ENCODE measurements at regions of chr2 and their contacts with region 1.

Region 1: DNA sequence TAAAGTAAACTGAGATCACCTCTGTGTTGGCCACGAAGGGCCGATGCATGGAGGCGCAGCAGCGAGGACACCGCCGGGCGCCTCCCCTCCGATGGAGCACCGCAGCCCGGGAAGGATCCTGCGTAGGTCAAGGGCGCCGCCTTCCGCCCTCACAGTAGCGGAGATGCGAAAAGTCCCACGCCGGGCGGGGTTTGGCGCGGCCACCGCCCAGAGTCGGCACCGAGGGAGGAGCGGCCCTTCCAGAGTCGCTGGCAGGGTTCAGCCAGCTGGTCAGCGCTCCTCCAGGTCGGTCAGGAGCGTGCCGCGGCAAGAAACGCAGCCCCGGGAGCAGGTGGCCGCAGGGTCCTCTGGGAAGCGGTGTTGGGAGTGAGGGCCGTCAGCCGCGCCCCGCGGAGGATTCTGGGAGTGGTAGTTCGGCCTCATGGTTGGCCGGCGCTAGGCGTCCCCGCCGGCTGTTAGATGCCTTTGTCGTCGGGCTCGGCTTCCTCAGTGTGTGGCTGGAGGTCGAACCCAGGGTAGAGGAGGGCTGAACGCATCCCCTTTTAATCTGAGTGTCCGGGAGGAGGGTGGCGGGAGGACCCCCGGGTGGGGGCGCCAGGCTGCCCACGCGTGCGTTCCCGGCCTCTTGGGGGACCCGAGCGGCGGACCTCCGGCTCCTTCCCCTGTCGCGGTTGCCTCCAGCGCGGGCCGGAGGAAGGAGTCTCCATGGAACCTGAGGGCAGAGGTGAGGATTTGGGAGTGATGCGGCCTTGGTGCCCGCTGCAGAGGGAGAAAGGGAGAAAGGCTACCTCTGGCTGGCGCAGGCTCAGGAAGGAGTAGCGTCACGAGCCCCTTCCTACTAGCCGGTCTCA is at the start of gene ZNF892:
- DNase-seq: peak; percentile 90
- H3K4me3 ChIP-seq: peak within 1 kb of the TSS; percentile 75
- H3K27ac ChIP-seq: peak within 1 kb of the TSS; percentile 74
- H3K4me1 ChIP-seq: peaks cover 3% of the 10 kb centered on the region
- H3K27me3 ChIP-seq: no peaks in the 10 kb centered on the region
- CTCF ChIP-seq: peak; percentile 55
- total RNA-seq, gene ZNF892: 7.2 and 8.2 TPM in 2 replicates

Region 2: GRCh38 chr2:95099910-95100309 is 107.4 kb before region 1 on chr2:
- CTCF ChIA-PET with region 1: no interaction called
- POLR2A ChIA-PET with region 1: no interaction called
- intact Hi-C with region 1: no loop called
- DNase-seq: no peak
- H3K4me3 ChIP-seq: no peak overlapping the region
- H3K27ac ChIP-seq: no peak overlapping the region
- H3K4me1 ChIP-seq: no peaks in the 10 kb centered on the region
- H3K27me3 ChIP-seq: no peaks in the 10 kb centered on the region
- CTCF ChIP-seq: no peak

Region 3: GRCh38 chr2:95165129-95166064 is 41.9 kb before region 1 on chr2 and contains the start of gene ZNF2:
- CTCF ChIA-PET with region 1: no interaction called
- POLR2A ChIA-PET with region 1: no interaction called
- intact Hi-C with region 1: loop called (anchors 5 kb)
- DNase-seq: peak; percentile 99
- H3K4me3 ChIP-seq: peak within 1 kb of the TSS; percentile 88
- H3K27ac ChIP-seq: peak within 1 kb of the TSS; percentile 92
- H3K4me1 ChIP-seq: peaks cover 6% of the 10 kb centered on the region
- H3K27me3 ChIP-seq: no peaks in the 10 kb centered on the region
- CTCF ChIP-seq: no peak
- total RNA-seq, gene ZNF2: 4.6 and 5.6 TPM in 2 replicates

Measured in A673 (cell line).